Activated naive CD4-positive, alpha-beta T cell treated with anti-CD3 and anti-CD28 coated beads for 36 hours (primary cell): ENCODE measurements at regions of chr1 and their contacts with region 1.

Region 1: DNA sequence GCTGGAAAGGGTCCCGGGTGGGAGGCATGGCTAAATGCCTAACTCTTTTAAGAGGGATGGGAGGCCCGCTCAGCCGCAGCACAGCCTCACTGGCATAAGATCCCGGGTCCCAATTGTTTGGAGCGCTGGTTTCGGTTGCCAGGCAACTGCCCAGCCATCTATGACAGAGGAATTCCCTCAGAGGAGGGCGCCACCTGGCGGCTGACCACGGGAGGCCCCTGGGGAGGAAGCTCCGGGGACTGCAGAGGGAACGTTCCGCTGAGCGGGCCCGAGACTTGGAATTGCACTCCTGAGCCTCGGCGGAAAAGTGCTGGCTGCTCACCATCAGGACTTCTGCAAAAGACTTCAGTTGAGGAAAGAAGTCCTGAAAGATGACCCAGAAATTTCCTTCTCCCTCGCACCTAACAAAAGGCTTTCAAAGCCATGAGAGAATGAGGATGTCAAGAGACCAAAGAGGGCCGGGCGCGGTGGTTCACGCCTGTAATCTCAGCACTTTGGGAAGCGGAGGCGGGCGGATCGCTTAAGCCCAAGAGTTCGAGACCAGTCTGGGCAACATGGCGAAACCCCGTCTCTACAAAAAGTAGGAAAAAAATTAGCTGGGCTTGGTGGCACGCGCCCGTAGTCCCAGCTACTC is 1.1 kb upstream of the ELAPOR1 start:
- DNase-seq: peak; percentile 93
- H3K4me3 Mint-ChIP-seq: peak overlapping the region; percentile 80
- H3K27ac Mint-ChIP-seq: no peak overlapping the region
- H3K4me1 Mint-ChIP-seq: peaks cover 40% of the 10 kb centered on the region
- H3K27me3 Mint-ChIP-seq: peaks cover 4% of the 10 kb centered on the region

Region 2: GRCh38 chr1:108512239-108512981 is 600.4 kb before region 1 on chr1:
- CTCF ChIA-PET with region 1: no interaction called
- intact Hi-C with region 1: loop called (anchors 5 kb)
- DNase-seq: no peak
- H3K4me3 Mint-ChIP-seq: no peak overlapping the region
- H3K27ac Mint-ChIP-seq: no peak overlapping the region
- H3K4me1 Mint-ChIP-seq: no peaks in the 10 kb centered on the region
- H3K27me3 Mint-ChIP-seq: peaks cover 1% of the 10 kb centered on the region

Region 3: DNA sequence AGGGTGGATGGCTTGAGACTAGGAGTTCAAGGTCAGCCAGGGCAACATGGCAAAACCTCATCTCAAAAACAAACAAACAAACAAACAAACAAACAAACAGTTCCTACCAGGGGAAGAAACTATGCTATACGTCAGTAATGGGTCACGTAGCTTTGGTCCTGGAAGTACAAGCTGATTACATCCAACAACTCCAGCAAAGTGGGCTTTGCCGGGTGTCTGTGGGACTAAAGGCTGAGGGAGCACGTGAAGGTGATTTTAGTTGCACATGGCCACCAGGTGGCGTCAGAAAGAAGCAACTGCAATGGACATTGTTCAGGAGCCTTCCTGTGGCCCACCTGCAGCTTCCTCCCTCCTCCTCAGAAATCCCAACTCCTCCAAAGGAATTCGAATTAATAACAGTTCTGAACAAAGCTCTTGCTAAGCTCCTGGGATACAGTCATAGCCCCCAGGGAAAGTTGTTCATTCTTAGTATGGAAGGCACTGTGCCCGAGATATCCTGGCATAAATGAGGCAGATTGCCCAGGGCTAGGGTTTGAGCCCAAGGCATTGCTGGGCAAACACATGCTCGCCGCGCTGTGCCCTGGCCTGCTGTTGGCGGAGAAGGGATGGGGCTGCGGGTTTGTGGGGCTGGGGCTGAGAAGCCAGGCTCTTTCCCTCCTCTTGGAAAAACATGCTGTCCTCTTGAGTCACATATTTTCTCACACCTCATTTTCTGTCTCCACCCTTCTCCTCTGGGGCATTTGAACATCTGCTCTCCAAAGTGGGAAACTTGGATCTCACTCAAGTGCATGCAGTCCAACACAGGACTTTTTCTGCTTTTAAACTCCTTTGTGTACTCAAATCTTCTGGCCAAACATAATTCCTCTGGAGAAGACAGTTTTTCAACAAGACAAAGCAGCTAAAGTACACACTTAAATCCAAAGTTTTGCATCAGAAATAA is 284.5 kb before region 1 on chr1:
- CTCF ChIA-PET with region 1: interaction called, 19 read pairs
- intact Hi-C with region 1: loop called (anchors 1 kb)
- DNase-seq: peak; percentile 83
- H3K4me3 Mint-ChIP-seq: no peak overlapping the region
- H3K27ac Mint-ChIP-seq: no peak overlapping the region
- H3K4me1 Mint-ChIP-seq: no peaks in the 10 kb centered on the region
- H3K27me3 Mint-ChIP-seq: no peaks in the 10 kb centered on the region

Region 4: GRCh38 chr1:108963052-108963686 is 149.6 kb before region 1 on chr1 and contains the start of gene CLCC1:
- CTCF ChIA-PET with region 1: interaction called, 4 read pairs
- intact Hi-C with region 1: loop called (anchors 1 kb)
- DNase-seq: peak; percentile 96
- H3K4me3 Mint-ChIP-seq: peak within 1 kb of the TSS; percentile 88
- H3K27ac Mint-ChIP-seq: peak within 1 kb of the TSS; percentile 87
- H3K4me1 Mint-ChIP-seq: peaks cover 26% of the 10 kb centered on the region
- H3K27me3 Mint-ChIP-seq: no peaks in the 10 kb centered on the region
- total RNA-seq, gene CLCC1: 14.3 to 15.2 TPM

Region 5: GRCh38 chr1:109075531-109076490 is 37.0 kb before region 1 on chr1 and contains the start of gene TAF13:
- CTCF ChIA-PET with region 1: interaction called, 4 read pairs
- intact Hi-C with region 1: loop called (anchors 1 kb)
- DNase-seq: peak; percentile 90
- H3K4me3 Mint-ChIP-seq: peak within 1 kb of the TSS; percentile 95
- H3K27ac Mint-ChIP-seq: peak within 1 kb of the TSS; percentile 95
- H3K4me1 Mint-ChIP-seq: peaks cover 16% of the 10 kb centered on the region
- H3K27me3 Mint-ChIP-seq: no peaks in the 10 kb centered on the region
- total RNA-seq, gene TAF13: 20.1 to 23.7 TPM

Region 6: GRCh38 chr1:109099938-109100773 is 12.6 kb before region 1 on chr1:
- CTCF ChIA-PET with region 1: interaction called, 71 read pairs
- intact Hi-C with region 1: loop called (anchors 1 kb)
- DNase-seq: peak; percentile 98
- H3K4me3 Mint-ChIP-seq: peak overlapping the region; percentile 99
- H3K27ac Mint-ChIP-seq: peak overlapping the region; percentile 97
- H3K4me1 Mint-ChIP-seq: peaks cover 23% of the 10 kb centered on the region
- H3K27me3 Mint-ChIP-seq: peaks cover 2% of the 10 kb centered on the region

Region 7: GRCh38 chr1:109193653-109194590 is 81.2 kb after region 1 on chr1:
- CTCF ChIA-PET with region 1: interaction called, 12 read pairs
- intact Hi-C with region 1: loop called (anchors 1 kb)
- DNase-seq: peak; percentile 73
- H3K4me3 Mint-ChIP-seq: no peak overlapping the region
- H3K27ac Mint-ChIP-seq: no peak overlapping the region
- H3K4me1 Mint-ChIP-seq: peaks cover 4% of the 10 kb centered on the region
- H3K27me3 Mint-ChIP-seq: no peaks in the 10 kb centered on the region

Region 8: GRCh38 chr1:109493805-109494539 is 381.2 kb after region 1 on chr1 and contains the start of gene CYB561D1:
- CTCF ChIA-PET with region 1: no interaction called
- intact Hi-C with region 1: no loop called
- DNase-seq: peak; percentile 90
- H3K4me3 Mint-ChIP-seq: peak within 1 kb of the TSS; percentile 98
- H3K27ac Mint-ChIP-seq: peak within 1 kb of the TSS; percentile 92
- H3K4me1 Mint-ChIP-seq: peaks cover 54% of the 10 kb centered on the region
- H3K27me3 Mint-ChIP-seq: no peaks in the 10 kb centered on the region
- total RNA-seq, gene CYB561D1: 6.6 to 8.5 TPM